Naive thymus-derived CD8-positive, alpha-beta T cell (primary cell): ENCODE measurements at regions of chr11 and their contacts with region 1.

Region 1: GRCh38 chr11:65487413-65488272 is 11.2 kb upstream of the MALAT1 start:
- DNase-seq: peak in 1 of 10 donors; percentile 53
- ATAC-seq: peak; percentile 58 to 70
- H3K4me3 Mint-ChIP-seq: peak overlapping the region in 7 of 10 donors; percentile 11 to 49 (median 39)
- H3K27ac Mint-ChIP-seq: peak overlapping the region in 8 of 10 donors; percentile 37 to 88 (median 65)
- H3K4me1 Mint-ChIP-seq: peaks cover 12 to 37% (median 30%) of the 10 kb centered on the region in 4 donors
- H3K27me3 Mint-ChIP-seq: no peaks in the 10 kb centered on the region

Region 2: DNA sequence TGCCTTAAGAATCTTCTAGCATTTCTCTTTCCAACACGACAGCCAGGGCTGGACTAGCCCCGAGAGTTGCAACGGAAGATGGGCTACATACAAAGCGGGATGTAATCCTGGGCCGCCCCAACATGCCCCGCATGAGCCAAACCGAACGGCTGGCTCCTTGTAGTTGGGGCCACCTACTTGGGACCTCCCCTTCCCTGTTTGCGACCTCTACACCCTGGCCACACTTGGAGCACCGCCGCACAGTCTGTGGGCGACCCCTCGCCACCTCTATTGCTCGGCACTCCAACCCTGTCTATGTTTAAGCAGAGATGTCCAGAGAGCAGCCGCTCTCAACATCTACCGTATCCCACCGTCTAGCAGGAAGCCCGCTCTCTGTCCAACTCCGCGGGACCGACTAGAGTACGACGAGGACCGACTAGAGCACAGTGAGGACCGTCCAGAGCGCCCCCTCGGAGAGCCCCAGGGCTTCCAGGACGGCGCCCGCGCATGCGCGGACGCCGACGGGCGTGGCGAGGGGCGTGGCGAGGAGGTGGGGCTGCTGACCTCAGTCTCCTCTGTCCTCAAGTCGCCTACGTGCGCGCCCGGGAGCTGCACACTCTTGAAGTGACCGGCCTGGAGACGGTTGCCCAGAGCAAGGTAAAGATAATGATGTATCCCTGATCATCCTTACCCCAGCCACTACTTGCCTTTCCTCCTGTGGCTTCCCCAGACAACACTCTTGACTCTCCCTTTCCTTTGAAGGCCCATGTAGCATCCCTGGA is 32.8 kb before region 1 on chr11:
- POLR2A ChIA-PET with region 1: no interaction called
- DNase-seq: peak; percentile 44 to 85 (median 70)
- ATAC-seq: peak; percentile 87 to 91
- H3K4me3 Mint-ChIP-seq: peak overlapping the region; percentile 81 to 96 (median 90)
- H3K27ac Mint-ChIP-seq: peak overlapping the region; percentile 57 to 95 (median 91)
- H3K4me1 Mint-ChIP-seq: peaks cover 3 to 35% (median 20%) of the 10 kb centered on the region in 4 donors
- H3K27me3 Mint-ChIP-seq: no peaks in the 10 kb centered on the region

Region 3: GRCh38 chr11:65477149-65477965 is 10.3 kb before region 1 on chr11:
- POLR2A ChIA-PET with region 1: interaction called, 91 read pairs
- DNase-seq: peak; percentile 68 to 91 (median 80)
- ATAC-seq: peak; percentile 85 to 90
- H3K4me3 Mint-ChIP-seq: peak overlapping the region; percentile 88 to 100 (median 100)
- H3K27ac Mint-ChIP-seq: peak overlapping the region; percentile 96 to 100 (median 99)
- H3K4me1 Mint-ChIP-seq: peaks cover 10 to 24% (median 19%) of the 10 kb centered on the region in 4 donors
- H3K27me3 Mint-ChIP-seq: peaks cover 0 to under 1% (median 0%) of the 10 kb centered on the region in 5 donors

Region 4: DNA sequence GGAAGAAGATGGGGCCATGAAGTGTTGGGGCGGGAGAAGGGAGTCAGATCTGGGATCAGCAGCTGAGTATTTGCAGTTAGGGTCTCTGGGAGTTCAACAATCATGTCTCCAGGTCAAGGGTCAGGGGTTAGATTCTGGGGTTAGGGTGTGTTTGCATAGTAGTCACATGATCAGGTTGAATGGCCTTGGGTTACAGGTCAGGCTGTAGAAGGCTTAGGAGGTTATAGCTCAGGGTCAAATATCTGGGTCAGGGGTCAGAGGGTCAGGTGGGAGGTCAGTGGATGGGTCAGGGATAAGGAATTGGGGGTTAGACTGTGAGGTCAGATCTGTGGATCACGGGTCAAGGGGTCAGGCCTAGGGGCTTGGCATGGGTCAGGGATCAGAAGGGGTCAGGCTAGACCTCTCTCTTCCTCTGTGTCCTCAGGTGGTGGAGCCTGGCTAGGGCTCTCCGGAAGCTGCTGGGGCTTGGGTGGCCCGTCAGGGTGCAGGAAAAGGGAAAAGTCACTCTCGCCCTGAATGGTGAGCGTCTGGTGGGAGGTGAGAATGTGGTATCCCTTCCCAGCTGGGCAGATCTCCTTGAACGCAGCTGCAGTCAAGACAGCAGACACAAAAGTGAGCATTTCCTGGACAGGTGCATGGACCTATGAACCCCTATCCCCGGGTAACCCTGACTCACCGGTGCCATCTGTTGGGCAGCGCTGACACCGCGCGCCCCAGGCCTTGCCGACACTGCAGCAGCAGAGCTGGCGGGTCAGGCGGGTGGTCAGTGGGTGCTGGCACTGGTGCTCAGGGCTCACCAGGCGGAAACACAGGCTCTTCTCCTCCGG is 64.1 kb after region 1 on chr11:
- POLR2A ChIA-PET with region 1: no interaction called
- DNase-seq: peak in 7 of 10 donors; percentile 33 to 77 (median 49)
- ATAC-seq: peak; percentile 25 to 30
- H3K4me3 Mint-ChIP-seq: peak overlapping the region; percentile 16 to 91 (median 63)
- H3K27ac Mint-ChIP-seq: peak overlapping the region; percentile 61 to 93 (median 82)
- H3K4me1 Mint-ChIP-seq: peaks cover 51 to 77% (median 75%) of the 10 kb centered on the region in 4 donors
- H3K27me3 Mint-ChIP-seq: no peaks in the 10 kb centered on the region